Activated CD8-positive, alpha-beta T cell treated with anti-CD3 and anti-CD28 coated beads, Interleukin-2, amount 10 ng/mL, durations not matched to agents 7 days and 5 days (primary cell): ENCODE measurements at regions of chr6 and their contacts with region 1.

Region 1: GRCh38 chr6:109382576-109383437 is 540 bp upstream of the CD164 start:
- DNase-seq: peak; percentile 95
- ATAC-seq: peak; percentile 72
- H3K4me3 Mint-ChIP-seq: peak overlapping the region; percentile 94
- H3K27ac Mint-ChIP-seq: peak overlapping the region; percentile 100
- H3K4me1 Mint-ChIP-seq: peaks cover 30% of the 10 kb centered on the region
- H3K27me3 Mint-ChIP-seq: peaks cover 5% of the 10 kb centered on the region

Region 2: DNA sequence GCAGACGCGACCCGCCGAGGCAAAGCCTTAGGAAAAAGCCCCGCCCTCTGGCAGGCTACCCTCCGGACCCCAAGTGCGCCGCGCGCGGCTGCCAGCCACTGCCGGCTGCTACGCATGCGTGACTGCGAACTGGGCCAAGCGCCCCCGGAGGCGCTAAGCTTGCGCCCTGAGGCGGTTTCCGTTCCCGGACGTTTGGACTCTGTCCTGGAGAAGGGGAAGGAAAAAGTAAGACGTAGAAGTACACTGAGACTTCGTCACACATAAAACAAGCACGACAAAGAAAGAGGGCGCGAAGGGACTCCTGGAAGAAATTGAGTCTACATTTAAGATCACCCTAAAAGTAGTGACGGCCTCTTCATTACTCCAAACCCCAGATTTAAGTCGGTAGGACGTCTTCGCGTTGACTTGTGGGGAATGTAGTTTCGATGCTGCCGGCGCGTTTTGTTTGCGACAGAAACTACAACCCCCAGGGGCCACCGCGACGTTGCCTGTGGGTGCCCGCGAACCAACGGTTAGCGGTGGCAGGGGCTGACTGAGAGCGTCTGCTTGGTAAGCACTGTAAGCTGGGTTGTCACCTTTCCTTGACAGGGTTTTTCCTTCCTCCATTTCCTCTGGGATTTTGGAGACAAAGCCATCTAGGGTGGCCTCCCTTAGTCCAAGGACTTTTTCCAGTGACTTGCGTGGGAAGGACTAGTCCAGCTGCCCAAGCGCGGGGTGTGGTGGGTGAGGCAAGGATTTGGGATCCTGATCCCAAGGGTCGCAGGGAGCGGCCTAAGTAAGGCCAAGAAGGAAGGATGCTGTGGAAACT is 287.6 kb before region 1 on chr6 and contains the start of gene CEP57L1:
- CTCF ChIA-PET with region 1: interaction called, 15 read pairs
- POLR2A ChIA-PET with region 1: interaction called, 23 read pairs
- DNase-seq: peak; percentile 97
- ATAC-seq: peak; percentile 77
- H3K4me3 Mint-ChIP-seq: peak within 1 kb of the TSS; percentile 86
- H3K27ac Mint-ChIP-seq: peak within 1 kb of the TSS; percentile 99
- H3K4me1 Mint-ChIP-seq: peaks cover 50% of the 10 kb centered on the region
- H3K27me3 Mint-ChIP-seq: no peaks in the 10 kb centered on the region
- total RNA-seq, gene CEP57L1: 25.2 to 25.3 TPM

Region 3: GRCh38 chr6:109236115-109237076 is 146.4 kb before region 1 on chr6:
- CTCF ChIA-PET with region 1: interaction called, 18 read pairs
- POLR2A ChIA-PET with region 1: interaction called, 16 read pairs
- DNase-seq: peak; percentile 60
- ATAC-seq: peak; percentile 82
- H3K4me3 Mint-ChIP-seq: no peak overlapping the region
- H3K27ac Mint-ChIP-seq: peak overlapping the region; percentile 77
- H3K4me1 Mint-ChIP-seq: peaks cover 27% of the 10 kb centered on the region
- H3K27me3 Mint-ChIP-seq: peaks cover 2% of the 10 kb centered on the region

Region 4: GRCh38 chr6:109406196-109406595 is 23.4 kb after region 1 on chr6:
- CTCF ChIA-PET with region 1: interaction called, 10 read pairs
- POLR2A ChIA-PET with region 1: interaction called, 3 read pairs
- DNase-seq: no peak
- ATAC-seq: no peak
- H3K4me3 Mint-ChIP-seq: no peak overlapping the region
- H3K27ac Mint-ChIP-seq: no peak overlapping the region
- H3K4me1 Mint-ChIP-seq: no peaks in the 10 kb centered on the region
- H3K27me3 Mint-ChIP-seq: peaks cover 15% of the 10 kb centered on the region

Region 5: GRCh38 chr6:109449795-109450673 is 67.2 kb after region 1 on chr6:
- CTCF ChIA-PET with region 1: interaction called, 10 read pairs
- POLR2A ChIA-PET with region 1: interaction called, 30 read pairs
- DNase-seq: peak; percentile 70
- ATAC-seq: peak; percentile 47
- H3K4me3 Mint-ChIP-seq: peak overlapping the region; percentile 70
- H3K27ac Mint-ChIP-seq: peak overlapping the region; percentile 85
- H3K4me1 Mint-ChIP-seq: peaks cover 70% of the 10 kb centered on the region
- H3K27me3 Mint-ChIP-seq: no peaks in the 10 kb centered on the region

Region 6: DNA sequence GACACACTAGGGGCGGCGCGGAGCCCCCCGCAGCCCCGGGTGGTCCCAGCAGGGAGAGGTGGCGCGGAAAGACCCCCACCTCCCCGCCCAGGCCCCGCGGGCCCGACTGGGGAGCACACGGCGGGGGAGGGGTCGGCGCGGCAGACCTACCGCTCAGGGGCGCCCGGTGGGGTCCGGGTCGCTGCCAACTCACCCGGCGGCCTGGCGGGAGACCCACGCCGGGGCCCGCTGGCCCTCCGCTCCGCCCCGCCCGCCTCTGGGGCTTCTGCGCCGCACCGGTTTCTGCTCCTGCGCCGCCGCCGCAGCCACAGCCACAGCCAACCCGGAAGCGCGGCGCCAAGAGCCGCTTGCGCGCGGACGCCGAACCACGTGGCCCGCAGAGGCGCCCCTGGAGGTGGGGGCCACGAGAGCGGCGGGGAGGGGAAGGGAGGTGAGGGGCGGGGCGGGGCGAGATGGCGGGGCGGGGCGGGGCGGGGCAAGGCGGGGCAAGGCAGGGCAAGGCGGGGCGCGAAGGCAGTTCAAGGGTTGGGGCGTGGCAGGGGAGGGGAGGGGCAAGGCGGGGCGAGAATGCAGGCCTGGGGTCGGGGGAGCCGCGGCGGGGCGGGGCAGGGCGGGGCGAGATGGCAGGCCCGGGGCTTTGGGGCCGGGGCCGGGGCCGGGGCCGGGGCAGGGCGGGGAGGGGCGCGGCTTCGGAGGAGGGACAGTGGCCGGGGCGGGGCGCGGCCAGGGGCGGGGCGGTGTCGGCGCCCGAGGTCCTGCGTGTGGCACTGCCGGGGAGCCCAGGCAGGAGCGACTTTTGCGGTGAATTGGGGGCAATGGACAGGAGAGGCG is 100.3 kb after region 1 on chr6 and contains the start of gene ZBTB24:
- CTCF ChIA-PET with region 1: interaction called, 15 read pairs
- POLR2A ChIA-PET with region 1: interaction called, 24 read pairs
- DNase-seq: peak; percentile 92
- ATAC-seq: peak; percentile 85
- H3K4me3 Mint-ChIP-seq: peak within 1 kb of the TSS; percentile 85
- H3K27ac Mint-ChIP-seq: peak within 1 kb of the TSS; percentile 85
- H3K4me1 Mint-ChIP-seq: peaks cover 47% of the 10 kb centered on the region
- H3K27me3 Mint-ChIP-seq: peaks cover 9% of the 10 kb centered on the region
- total RNA-seq, gene ZBTB24: 16.0 to 16.3 TPM

Region 7: DNA sequence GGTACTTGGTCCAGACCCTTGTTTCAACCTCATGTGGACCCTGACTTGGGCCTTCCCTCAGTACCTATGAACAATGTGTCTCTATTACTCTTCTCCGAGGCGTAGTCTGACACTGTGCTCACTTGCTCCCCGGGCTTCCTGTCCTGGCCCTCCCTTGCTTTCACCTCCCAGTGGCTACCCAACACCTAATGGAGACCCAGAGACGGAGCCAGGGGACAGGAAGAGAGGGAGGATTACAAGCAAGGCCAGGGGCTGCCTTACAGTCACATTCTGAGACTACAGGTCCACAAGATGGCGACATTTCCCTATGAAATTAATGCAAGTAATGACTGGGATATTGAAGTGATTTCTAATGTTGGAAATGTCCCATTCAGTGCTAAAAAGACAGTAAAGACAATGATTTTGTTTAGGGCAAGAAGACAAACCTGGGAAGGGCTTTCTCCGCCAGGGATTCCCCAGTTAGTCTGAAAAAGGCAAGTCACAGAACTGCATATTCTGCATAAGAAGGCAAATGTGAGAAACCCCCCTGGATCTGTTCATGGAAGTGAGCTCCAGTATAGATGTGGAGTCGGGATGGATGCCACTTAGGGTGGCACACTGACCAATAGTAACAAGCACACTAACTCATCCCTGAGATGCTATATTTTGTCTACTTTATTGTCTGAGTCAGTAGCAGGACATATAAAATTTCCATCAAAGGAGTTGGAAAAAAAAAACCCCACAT is 144.3 kb after region 1 on chr6:
- CTCF ChIA-PET with region 1: no interaction called
- POLR2A ChIA-PET with region 1: no interaction called
- DNase-seq: peak; percentile 74
- ATAC-seq: peak; percentile 90
- H3K4me3 Mint-ChIP-seq: no peak overlapping the region
- H3K27ac Mint-ChIP-seq: no peak overlapping the region
- H3K4me1 Mint-ChIP-seq: peaks cover 5% of the 10 kb centered on the region
- H3K27me3 Mint-ChIP-seq: no peaks in the 10 kb centered on the region